AG04450 (cell line): ENCODE measurements at regions of chr14 and their contacts with region 1.

Region 1: GRCh38 chr14:102314242-102315011 is 5.1 kb upstream of the ZNF839 start:
- DNase-seq: peak; percentile 54
- H3K4me3 ChIP-seq: peak overlapping the region; percentile 62
- H3K27ac ChIP-seq: no peak overlapping the region
- H3K27me3 ChIP-seq: no peaks in the 10 kb centered on the region
- CTCF ChIP-seq: peak; percentile 85

Region 2: DNA sequence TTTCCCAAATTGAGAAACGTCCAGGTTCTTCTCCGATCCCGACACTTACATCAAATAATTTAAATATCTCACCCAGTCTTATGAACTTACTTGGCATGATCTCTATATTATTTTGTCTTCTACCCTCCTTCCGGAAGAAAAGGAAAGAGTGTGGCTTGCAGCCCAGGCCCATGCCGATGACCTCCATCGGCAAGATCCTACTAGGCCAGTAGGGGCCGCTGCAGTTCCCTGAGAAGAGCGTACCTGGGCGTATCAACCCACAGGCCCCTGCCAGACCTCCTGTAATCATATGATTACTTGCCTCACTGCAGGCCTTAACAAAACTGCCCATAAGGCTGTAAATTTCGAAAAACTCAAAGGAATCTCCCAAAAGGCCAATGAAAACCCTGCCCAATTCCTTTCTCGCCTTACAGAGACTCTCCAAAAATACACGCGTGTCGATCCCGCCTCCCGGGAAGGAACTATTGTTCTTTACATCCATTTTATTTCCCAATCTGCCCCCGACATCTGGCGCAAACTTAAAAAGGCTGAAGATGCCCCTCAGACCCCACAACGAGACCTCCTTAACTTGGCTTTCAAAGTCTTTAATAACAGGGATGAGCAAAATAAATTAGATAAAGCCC is 79.0 kb before region 1 on chr14:
- CTCF ChIA-PET with region 1: interaction called, 17 read pairs
- POLR2A ChIA-PET with region 1: no interaction called
- DNase-seq: peak; percentile 72
- H3K4me3 ChIP-seq: 0 out of 2 replicates have a peak overlapping the region, but pooled peaks have one; percentile 17
- H3K27ac ChIP-seq: peak overlapping the region; percentile 57
- H3K27me3 ChIP-seq: no peaks in the 10 kb centered on the region
- CTCF ChIP-seq: peak; percentile 93